CD4-positive, alpha-beta T cell (primary cell): ENCODE measurements at regions of chr17 and their contacts with region 1.

Region 1: DNA sequence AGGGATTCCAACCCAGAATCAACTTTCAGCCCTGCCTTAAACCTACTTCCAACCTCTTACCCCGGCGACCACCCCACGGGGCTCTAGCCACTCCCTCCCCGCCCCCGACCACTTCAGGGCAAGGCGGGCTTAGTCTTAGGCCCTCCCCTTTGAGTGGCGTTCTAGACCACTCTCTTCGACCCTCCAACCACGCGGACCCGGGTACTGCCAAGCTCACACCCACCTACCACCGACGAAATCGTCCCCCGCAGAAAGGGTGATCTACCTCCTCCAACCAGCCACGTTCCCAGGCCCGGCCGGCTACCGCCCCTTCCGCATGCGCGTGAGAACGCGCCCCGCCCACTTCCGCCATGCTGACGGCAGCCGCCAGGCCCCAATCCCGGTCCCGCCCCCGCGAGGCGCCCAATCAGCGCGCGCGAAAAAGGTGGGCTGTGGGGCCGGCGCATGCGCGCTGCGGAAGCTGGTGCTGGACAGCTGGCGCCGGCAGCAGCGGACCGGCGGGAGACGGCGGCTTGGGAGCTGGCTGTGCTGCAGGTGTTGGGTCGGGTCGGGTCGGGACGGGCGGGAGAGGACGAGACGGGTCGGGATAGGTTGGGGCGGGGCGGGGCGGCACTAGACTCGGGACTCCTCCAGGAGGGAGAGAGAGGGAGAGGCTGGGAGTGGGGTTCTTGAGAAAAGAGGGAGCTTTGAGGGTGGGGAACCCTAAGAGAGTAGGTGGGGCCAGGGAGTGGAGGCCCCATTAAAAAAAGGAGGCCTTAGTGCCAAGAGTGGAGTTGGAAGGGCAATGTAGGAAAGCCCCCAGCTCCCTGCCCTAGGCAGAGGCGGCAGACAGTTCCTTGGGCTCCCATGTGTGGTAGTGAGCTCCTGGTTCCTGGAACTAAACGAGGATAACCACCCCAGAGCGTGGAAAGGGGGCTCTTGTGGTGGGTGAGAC is at the start of gene NAT9:
- DNase-seq: peak; percentile 96 to 100 (median 99)
- ATAC-seq: peak; percentile 72
- H3K4me3 ChIP-seq: peak within 1 kb of the TSS; percentile 79
- H3K4me3 Mint-ChIP-seq: peak within 1 kb of the TSS; percentile 99
- H3K27ac ChIP-seq: peak within 1 kb of the TSS; percentile 48 to 51
- H3K27ac Mint-ChIP-seq: peak within 1 kb of the TSS; percentile 86
- H3K4me1 ChIP-seq: peaks cover 77% of the 10 kb centered on the region
- H3K4me1 Mint-ChIP-seq: peaks cover 64% of the 10 kb centered on the region
- H3K27me3 ChIP-seq: no peaks in the 10 kb centered on the region
- H3K27me3 Mint-ChIP-seq: no peaks in the 10 kb centered on the region
- CTCF ChIP-seq: no peak
- total RNA-seq, gene NAT9: 34.6 to 38.2 TPM

Region 2: DNA sequence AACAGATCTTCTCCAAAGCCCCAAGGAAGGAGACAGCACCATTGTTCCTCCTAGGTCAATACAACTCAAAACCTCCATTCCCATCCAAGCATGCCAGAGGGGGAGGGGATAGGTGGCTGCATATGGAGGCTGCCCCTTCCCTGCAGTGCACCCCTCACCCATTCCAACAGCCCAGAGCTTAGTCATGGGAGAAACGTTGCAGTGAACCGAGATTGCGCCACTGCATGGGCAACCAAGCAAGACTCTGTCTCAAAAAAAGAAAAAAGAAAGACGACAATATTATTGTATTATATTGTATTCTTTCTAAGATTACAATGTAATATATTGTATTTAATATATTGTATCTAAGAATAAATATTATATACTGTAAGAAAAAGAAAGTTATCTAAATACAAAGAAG is 116.4 kb before region 1 on chr17:
- CTCF ChIA-PET with region 1: interaction called, 29 read pairs
- POLR2A ChIA-PET with region 1: interaction called, 16 read pairs
- intact Hi-C with region 1: no loop called
- DNase-seq: no peak
- ATAC-seq: no peak
- H3K4me3 ChIP-seq: no peak overlapping the region
- H3K4me3 Mint-ChIP-seq: no peak overlapping the region
- H3K27ac ChIP-seq: no peak overlapping the region
- H3K27ac Mint-ChIP-seq: no peak overlapping the region
- H3K4me1 ChIP-seq: peaks cover 6% of the 10 kb centered on the region
- H3K4me1 Mint-ChIP-seq: peaks cover 5% of the 10 kb centered on the region
- H3K27me3 ChIP-seq: peaks cover 5 to 12% of the 10 kb centered on the region in 2 experiments
- H3K27me3 Mint-ChIP-seq: peaks cover 52% of the 10 kb centered on the region
- CTCF ChIP-seq: no peak

Region 3: DNA sequence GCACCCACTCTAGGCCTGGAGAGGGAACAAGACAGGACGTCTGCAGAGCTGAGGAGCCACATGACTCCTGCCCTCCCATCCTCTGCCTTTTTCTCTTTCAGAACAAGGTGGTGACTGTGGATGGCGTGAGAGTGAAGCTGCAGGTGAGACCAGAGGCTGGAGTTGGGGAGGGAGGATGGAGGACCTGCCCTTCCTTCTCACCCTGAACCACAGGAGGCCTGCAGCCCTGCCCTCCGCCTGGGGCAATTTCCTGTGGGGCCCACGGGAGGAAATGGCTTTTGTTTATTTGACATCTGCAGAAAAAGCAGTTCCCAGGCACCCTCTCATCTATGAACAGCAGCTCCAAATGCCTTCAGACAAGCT is 34.2 kb before region 1 on chr17:
- CTCF ChIA-PET with region 1: interaction called, 39 read pairs
- POLR2A ChIA-PET with region 1: interaction called, 28 read pairs
- intact Hi-C with region 1: loop called in 1 of 2 experiments (anchors 5 kb)
- DNase-seq: peak in 11 of 14 experiments; percentile 32 to 81 (median 62)
- ATAC-seq: peak; percentile 5
- H3K4me3 ChIP-seq: peak overlapping the region; percentile 32
- H3K4me3 Mint-ChIP-seq: peak overlapping the region; percentile 82
- H3K27ac ChIP-seq: peak overlapping the region; percentile 58 to 65
- H3K27ac Mint-ChIP-seq: peak overlapping the region; percentile 91
- H3K4me1 ChIP-seq: peaks cover 100% of the 10 kb centered on the region
- H3K4me1 Mint-ChIP-seq: peaks cover 86% of the 10 kb centered on the region
- H3K27me3 ChIP-seq: no peaks in the 10 kb centered on the region
- H3K27me3 Mint-ChIP-seq: no peaks in the 10 kb centered on the region
- CTCF ChIP-seq: no peak

Region 4: GRCh38 chr17:74748529-74749365 is 27.6 kb before region 1 on chr17 and contains the start of gene NHERF1:
- CTCF ChIA-PET with region 1: interaction called, 39 read pairs
- POLR2A ChIA-PET with region 1: interaction called, 35 read pairs
- intact Hi-C with region 1: loop called (anchors 1 to 5 kb)
- DNase-seq: peak in 13 of 14 experiments; percentile 83 to 97 (median 94)
- ATAC-seq: peak; percentile 82
- H3K4me3 ChIP-seq: peak within 1 kb of the TSS; percentile 98
- H3K4me3 Mint-ChIP-seq: peak within 1 kb of the TSS; percentile 92
- H3K27ac ChIP-seq: peak within 1 kb of the TSS; percentile 48 to 84
- H3K27ac Mint-ChIP-seq: peak within 1 kb of the TSS; percentile 94
- H3K4me1 ChIP-seq: peaks cover 74% of the 10 kb centered on the region
- H3K4me1 Mint-ChIP-seq: peaks cover 74% of the 10 kb centered on the region
- H3K27me3 ChIP-seq: no peaks in the 10 kb centered on the region
- H3K27me3 Mint-ChIP-seq: no peaks in the 10 kb centered on the region
- CTCF ChIP-seq: no peak
- total RNA-seq, gene NHERF1: 68.4 to 72.4 TPM

Region 5: DNA sequence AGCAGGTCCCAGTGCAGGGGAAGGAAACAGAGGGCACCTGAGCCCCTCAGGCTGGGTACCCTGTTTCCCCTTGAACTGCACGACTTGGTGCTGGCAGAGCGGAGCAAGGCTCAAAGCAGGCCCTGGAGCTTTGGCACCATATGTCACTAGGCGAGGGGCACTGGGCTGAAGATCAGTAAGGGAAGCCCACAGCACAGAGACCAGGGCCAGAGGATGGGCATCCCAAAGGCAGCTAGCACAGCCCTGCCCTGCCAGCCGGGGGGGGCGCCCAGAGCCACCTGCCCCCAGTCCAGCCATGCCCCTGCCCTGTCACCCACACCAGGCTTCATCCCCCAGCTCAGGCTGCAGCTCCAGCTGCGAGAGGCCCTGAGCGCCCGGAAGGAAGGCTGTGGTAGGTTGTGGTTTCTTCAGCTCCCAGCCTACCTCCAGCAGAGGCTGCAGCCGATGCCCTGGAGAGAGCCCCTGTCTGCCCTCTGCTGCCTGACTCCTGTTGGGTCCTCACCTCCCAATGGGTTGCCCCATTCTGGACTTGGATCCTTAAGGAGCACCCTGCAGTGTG is 17.0 kb before region 1 on chr17:
- CTCF ChIA-PET with region 1: interaction called, 11 read pairs
- POLR2A ChIA-PET with region 1: interaction called, 15 read pairs
- intact Hi-C with region 1: no loop called
- DNase-seq: peak; percentile 37 to 83 (median 52)
- ATAC-seq: peak; percentile 82
- H3K4me3 ChIP-seq: peak overlapping the region; percentile 35
- H3K4me3 Mint-ChIP-seq: peak overlapping the region; percentile 88
- H3K27ac ChIP-seq: peak overlapping the region; percentile 61 to 63
- H3K27ac Mint-ChIP-seq: peak overlapping the region; percentile 91
- H3K4me1 ChIP-seq: peaks cover 100% of the 10 kb centered on the region
- H3K4me1 Mint-ChIP-seq: peaks cover 70% of the 10 kb centered on the region
- H3K27me3 ChIP-seq: no peaks in the 10 kb centered on the region
- H3K27me3 Mint-ChIP-seq: no peaks in the 10 kb centered on the region
- CTCF ChIP-seq: peak; percentile 38

Region 6: DNA sequence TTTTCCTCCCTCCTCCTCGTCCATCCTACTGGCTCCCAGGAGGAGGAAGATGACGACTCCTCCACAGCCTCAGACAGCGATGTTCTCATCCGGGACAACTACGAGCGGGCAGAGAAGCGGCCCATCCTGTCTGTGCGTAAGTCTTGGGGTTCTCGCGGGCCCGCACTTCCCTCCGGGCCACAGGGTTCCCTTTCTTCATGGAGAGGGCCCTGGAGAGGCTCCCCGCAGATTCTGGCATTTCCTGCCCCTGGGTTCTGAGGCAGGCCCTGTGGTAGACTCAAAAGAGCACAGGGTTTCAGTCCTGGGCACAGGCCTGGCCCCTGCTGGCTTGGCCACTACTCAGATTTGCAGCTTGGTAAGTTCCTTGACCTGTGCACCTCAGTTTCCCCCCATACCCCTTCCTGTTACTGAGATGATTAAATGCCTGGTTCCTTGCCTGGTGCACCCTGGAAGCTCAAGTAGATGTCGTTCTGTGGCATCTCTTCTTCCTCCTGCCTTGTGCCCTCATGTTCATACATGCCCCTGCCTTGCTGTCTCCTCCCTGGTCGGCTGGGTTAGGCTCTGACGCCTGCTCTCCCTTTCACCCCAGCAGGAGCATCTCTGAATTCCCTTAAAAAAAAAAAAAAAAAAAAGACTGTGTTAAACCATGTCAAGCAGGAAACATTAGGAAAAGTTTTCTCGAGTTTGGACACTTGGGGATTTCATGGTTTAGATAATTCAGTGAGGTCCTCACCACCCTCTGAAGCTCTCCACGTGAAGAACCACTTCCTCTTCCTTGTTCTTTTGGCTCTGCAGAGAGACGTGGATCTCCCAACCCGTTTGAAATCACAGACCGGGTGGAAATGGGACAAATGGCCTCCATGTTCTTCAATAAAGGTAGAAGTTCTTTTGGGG is 14.1 kb after region 1 on chr17:
- CTCF ChIA-PET with region 1: interaction called, 6 read pairs
- POLR2A ChIA-PET with region 1: interaction called, 24 read pairs
- intact Hi-C with region 1: loop called in 1 of 2 experiments (anchors 1 kb)
- DNase-seq: peak in 2 of 14 experiments; percentile 37 to 39
- ATAC-seq: no peak
- H3K4me3 ChIP-seq: no peak overlapping the region
- H3K4me3 Mint-ChIP-seq: no peak overlapping the region
- H3K27ac ChIP-seq: peak overlapping the region in 1 of 2 donors; percentile 30
- H3K27ac Mint-ChIP-seq: peak overlapping the region; percentile 74
- H3K4me1 ChIP-seq: peaks cover 41% of the 10 kb centered on the region
- H3K4me1 Mint-ChIP-seq: peaks cover 38% of the 10 kb centered on the region
- H3K27me3 ChIP-seq: no peaks in the 10 kb centered on the region
- H3K27me3 Mint-ChIP-seq: no peaks in the 10 kb centered on the region
- CTCF ChIP-seq: no peak

Region 7: DNA sequence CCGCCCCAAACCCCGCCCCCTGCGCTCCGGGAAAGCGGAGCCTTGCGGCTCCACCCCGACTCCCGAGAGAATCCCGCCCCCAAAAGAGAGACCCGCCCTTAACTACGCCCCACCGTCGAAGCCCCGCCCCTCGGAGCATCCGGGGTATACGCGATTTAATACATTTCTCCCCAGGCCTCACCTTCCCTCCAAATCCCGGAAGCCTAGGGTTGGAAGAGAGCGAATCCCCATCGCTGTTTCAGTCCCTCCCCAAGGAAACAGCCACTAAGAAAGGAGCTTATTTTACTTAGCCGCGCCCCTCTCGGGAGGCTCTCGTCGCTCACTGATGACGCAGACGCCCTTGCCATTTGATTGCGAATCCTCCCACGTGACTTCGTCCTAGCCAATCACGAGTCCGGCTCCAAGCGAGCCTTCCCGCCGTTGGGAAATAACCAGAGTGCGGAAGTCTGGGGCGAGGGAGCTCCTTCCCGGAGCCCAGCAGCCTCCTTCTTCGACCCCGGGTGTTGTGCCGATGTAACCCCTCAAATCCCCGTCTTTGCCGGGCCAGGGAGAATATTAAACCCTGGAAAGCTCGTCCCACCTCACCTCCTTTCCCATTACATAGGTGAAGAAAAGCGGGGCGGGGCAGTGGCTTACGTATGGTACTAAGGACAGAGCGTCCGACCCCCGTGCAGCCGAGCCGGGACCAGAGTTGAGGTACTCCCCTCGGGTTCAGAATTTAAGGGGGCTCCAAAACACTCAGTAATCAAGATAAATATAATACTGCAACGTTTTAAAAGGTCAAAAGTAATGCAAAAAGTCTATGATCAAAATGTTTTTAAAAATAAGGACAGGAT is 96.9 kb after region 1 on chr17:
- CTCF ChIA-PET with region 1: no interaction called
- POLR2A ChIA-PET with region 1: interaction called, 11 read pairs
- intact Hi-C with region 1: loop called in 1 of 2 experiments (anchors 5 kb)
- DNase-seq: peak; percentile 98 to 100 (median 99)
- ATAC-seq: peak; percentile 94
- H3K4me3 ChIP-seq: peak overlapping the region; percentile 67
- H3K4me3 Mint-ChIP-seq: peak overlapping the region; percentile 90
- H3K27ac ChIP-seq: peak overlapping the region; percentile 89 to 92
- H3K27ac Mint-ChIP-seq: peak overlapping the region; percentile 92
- H3K4me1 ChIP-seq: peaks cover 25% of the 10 kb centered on the region
- H3K4me1 Mint-ChIP-seq: peaks cover 24% of the 10 kb centered on the region
- H3K27me3 ChIP-seq: no peaks in the 10 kb centered on the region
- H3K27me3 Mint-ChIP-seq: no peaks in the 10 kb centered on the region
- CTCF ChIP-seq: no peak

Region 8: GRCh38 chr17:75087558-75088453 is 311.5 kb after region 1 on chr17 and contains the start of gene SLC16A5:
- CTCF ChIA-PET with region 1: no interaction called
- POLR2A ChIA-PET with region 1: no interaction called
- intact Hi-C with region 1: no loop called
- DNase-seq: peak in 11 of 14 experiments; percentile 28 to 72 (median 53)
- ATAC-seq: peak; percentile 72
- H3K4me3 ChIP-seq: peak within 1 kb of the TSS; percentile 74
- H3K4me3 Mint-ChIP-seq: peak within 1 kb of the TSS; percentile 91
- H3K27ac ChIP-seq: peak within 1 kb of the TSS; percentile 41 to 53
- H3K27ac Mint-ChIP-seq: peak within 1 kb of the TSS; percentile 87
- H3K4me1 ChIP-seq: peaks cover 47% of the 10 kb centered on the region
- H3K4me1 Mint-ChIP-seq: peaks cover 63% of the 10 kb centered on the region
- H3K27me3 ChIP-seq: no peaks in the 10 kb centered on the region
- H3K27me3 Mint-ChIP-seq: no peaks in the 10 kb centered on the region
- CTCF ChIP-seq: no peak
- total RNA-seq, gene SLC16A5: 9.2 to 11.0 TPM

Region 9: DNA sequence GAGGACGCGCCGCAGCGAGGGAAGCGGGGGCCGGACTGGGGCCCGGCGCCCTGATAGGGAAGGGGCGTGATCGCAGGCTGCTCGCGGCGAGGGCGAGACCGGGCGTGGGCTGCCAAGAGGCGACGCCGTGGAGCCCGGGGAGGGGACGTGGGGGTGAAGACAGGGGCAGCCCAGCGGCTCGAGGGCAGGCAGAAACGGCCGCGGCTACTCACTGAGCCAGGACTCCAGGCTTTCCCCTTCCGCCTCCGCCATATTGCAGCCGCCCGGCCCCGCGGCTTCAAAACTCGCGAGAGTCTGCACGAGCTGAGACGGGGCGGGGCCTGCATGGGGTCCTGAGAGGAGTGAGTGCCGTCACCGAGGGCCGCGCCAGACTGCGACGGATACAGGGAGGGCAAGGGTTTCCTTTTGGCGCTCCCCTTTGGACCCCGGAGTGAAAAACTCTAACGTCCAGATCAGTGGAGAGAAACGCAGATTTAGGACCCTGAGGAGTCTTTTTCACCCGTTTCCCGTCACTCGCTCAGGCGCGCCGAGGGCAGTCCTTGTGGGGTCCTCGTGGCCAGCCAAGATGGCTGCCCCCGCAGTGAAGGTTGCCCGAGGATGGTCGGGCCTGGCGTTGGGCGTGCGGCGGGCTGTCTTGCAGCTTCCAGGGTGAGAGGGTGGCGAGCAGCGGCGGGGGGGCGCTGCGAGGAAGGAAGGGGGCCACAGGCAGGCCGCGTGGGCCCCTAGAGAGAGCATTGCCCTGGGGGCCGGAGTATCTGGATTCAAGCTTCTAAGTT is 485.2 kb after region 1 on chr17 and contains the starts of genes GGA3 and MRPS7:
- CTCF ChIA-PET with region 1: no interaction called
- POLR2A ChIA-PET with region 1: no interaction called
- intact Hi-C with region 1: no loop called
- DNase-seq: peak; percentile 92 to 97 (median 95)
- ATAC-seq: peak; percentile 94
- H3K4me3 ChIP-seq: peak within 1 kb of the TSS; percentile 90
- H3K4me3 Mint-ChIP-seq: peak within 1 kb of the TSS; percentile 100
- H3K27ac ChIP-seq: peak within 1 kb of the TSS; percentile 94 to 96
- H3K27ac Mint-ChIP-seq: peak within 1 kb of the TSS; percentile 100
- H3K4me1 ChIP-seq: peaks cover 35% of the 10 kb centered on the region
- H3K4me1 Mint-ChIP-seq: peaks cover 58% of the 10 kb centered on the region
- H3K27me3 ChIP-seq: no peaks in the 10 kb centered on the region
- H3K27me3 Mint-ChIP-seq: no peaks in the 10 kb centered on the region
- CTCF ChIP-seq: no peak
- total RNA-seq, gene GGA3: 88.8 to 96.5 TPM
- total RNA-seq, gene MRPS7: 33.2 to 35.2 TPM

Region 10: GRCh38 chr17:75587675-75588595 is 811.6 kb after region 1 on chr17 and contains the start of gene MYO15B:
- CTCF ChIA-PET with region 1: no interaction called
- POLR2A ChIA-PET with region 1: no interaction called
- intact Hi-C with region 1: no loop called
- DNase-seq: peak; percentile 23 to 80 (median 54)
- ATAC-seq: peak; percentile 36
- H3K4me3 ChIP-seq: peak within 1 kb of the TSS; percentile 66
- H3K4me3 Mint-ChIP-seq: peak within 1 kb of the TSS; percentile 68
- H3K27ac ChIP-seq: peak within 1 kb of the TSS; percentile 55 to 56
- H3K27ac Mint-ChIP-seq: peak within 1 kb of the TSS; percentile 42
- H3K4me1 ChIP-seq: peaks cover 32% of the 10 kb centered on the region
- H3K4me1 Mint-ChIP-seq: peaks cover 11% of the 10 kb centered on the region
- H3K27me3 ChIP-seq: no peaks in the 10 kb centered on the region
- H3K27me3 Mint-ChIP-seq: no peaks in the 10 kb centered on the region
- CTCF ChIP-seq: no peak
- total RNA-seq, gene MYO15B: 202 to 209 TPM